H1 (cell line): ENCODE measurements at regions of chr12 and their contacts with region 1.

Region 1: DNA sequence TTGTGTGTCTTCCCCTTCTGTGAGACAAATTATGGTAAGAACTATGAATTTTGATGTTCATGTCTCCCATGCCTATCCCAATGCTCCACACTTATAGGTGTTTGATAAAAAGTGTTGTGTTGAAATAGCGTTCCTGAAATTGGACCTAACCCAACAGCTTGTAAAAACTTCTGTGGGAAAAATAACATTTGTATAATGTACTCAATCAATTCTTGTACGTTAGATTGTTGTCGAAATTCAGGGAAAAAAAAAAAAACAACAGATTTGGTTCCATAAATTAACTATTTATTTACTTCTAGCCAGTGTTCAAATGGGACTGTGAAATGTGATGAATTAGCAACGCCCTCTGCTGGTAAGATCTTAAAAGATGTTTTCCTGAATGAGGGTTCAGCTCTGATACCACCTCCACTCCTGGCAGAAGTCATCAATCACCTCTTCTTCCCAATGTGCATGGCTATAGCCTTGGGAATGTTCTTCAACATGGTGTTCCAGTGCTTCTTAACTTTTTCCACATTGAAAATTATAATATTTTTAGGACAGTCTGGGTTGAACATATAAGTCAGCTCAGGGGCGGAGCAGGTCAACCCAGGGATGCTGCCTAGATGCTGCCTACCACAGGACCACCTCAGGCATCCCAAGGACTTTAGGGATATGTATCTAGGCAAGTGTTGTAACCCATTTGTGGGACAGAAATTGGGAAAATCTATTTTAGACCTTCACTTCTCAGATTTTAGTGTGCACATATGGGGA is 170.6 kb downstream of the OTOGL start:
- DNase-seq: no peak
- H3K4me3 ChIP-seq: no peak overlapping the region
- H3K27ac ChIP-seq: no peak overlapping the region
- H3K4me1 ChIP-seq: no peaks in the 10 kb centered on the region
- H3K27me3 ChIP-seq: no peaks in the 10 kb centered on the region
- CTCF ChIP-seq: peak in 2 of 3 experiments; percentile 59 to 64; a peak in 2 of 4 replicates
- EP300 ChIP-seq: no peak
- POLR2A ChIP-seq: no peak
- RAD21 ChIP-seq: peak; percentile 74 to 78

Region 2: DNA sequence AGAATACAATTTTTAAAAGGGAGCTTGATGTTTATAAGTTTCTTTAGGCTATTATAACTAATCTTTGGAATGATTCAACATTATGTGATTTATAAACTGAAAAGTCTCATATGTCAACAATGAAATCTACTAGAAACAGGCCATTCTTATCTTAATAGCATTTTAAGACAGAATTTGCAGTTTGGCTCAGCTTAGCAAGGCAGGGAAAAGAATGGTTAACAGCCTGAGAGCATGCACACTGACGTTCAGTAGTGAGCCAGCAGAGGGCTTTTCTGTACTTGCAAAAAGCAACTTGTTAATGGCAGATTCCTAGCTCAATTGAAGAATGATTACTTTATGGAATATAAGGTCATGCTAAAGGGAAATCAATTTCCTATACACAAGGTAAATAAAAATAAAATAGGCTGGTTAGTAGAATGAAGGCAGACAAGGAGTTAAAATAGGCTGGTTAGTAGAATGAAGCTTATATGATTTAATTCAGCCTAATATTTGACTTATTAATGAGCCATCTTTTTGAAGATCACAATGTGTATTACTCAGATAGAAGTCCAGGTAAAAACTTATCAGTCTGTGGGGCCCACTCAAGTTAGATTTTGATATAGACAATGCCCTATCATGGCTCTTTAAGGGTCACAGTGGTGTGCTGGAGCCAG is 74.8 kb before region 1 on chr12:
- CTCF ChIA-PET with region 1: interaction called, 136 read pairs
- POLR2A ChIA-PET with region 1: no interaction called
- DNase-seq: no peak
- H3K4me3 ChIP-seq: no peak overlapping the region
- H3K27ac ChIP-seq: no peak overlapping the region
- H3K4me1 ChIP-seq: no peaks in the 10 kb centered on the region
- H3K27me3 ChIP-seq: no peaks in the 10 kb centered on the region
- CTCF ChIP-seq: peak in 2 of 3 experiments; percentile 64 to 67; a peak in 3 of 4 replicates
- EP300 ChIP-seq: no peak
- POLR2A ChIP-seq: no peak
- RAD21 ChIP-seq: peak; percentile 63 to 76

Region 3: GRCh38 chr12:80226576-80226975 is 43.4 kb before region 1 on chr12:
- CTCF ChIA-PET with region 1: interaction called, 13 read pairs
- POLR2A ChIA-PET with region 1: no interaction called
- DNase-seq: no peak
- H3K4me3 ChIP-seq: no peak overlapping the region
- H3K27ac ChIP-seq: no peak overlapping the region
- H3K4me1 ChIP-seq: no peaks in the 10 kb centered on the region; a peak in 1 of 7 replicates
- H3K27me3 ChIP-seq: no peaks in the 10 kb centered on the region
- CTCF ChIP-seq: no peak
- EP300 ChIP-seq: no peak
- POLR2A ChIP-seq: no peak
- RAD21 ChIP-seq: no peak

Region 4: DNA sequence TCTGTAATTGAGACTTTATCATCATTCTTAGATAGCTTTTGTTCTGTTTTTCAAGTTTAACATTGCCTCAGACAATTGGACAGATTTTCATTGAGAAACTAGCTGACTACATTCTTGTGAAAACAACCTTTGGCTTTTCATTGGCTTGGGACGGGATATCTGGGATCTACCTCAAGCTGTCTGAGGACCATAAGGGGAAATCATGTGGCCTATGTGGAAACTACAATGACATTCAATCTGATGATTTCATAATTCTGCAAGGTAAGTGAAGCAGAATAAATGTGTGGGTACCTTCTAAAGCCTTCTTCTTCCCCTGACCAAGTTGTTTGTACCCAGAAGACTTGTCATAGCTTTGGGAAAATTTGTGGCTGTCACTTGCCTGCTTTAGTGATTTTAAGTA is 37.1 kb before region 1 on chr12:
- CTCF ChIA-PET with region 1: interaction called, 13 read pairs
- POLR2A ChIA-PET with region 1: no interaction called
- DNase-seq: no peak
- H3K4me3 ChIP-seq: no peak overlapping the region
- H3K27ac ChIP-seq: no peak overlapping the region
- H3K4me1 ChIP-seq: no peaks in the 10 kb centered on the region; a peak in 1 of 7 replicates
- H3K27me3 ChIP-seq: no peaks in the 10 kb centered on the region
- CTCF ChIP-seq: no peak
- EP300 ChIP-seq: no peak
- POLR2A ChIP-seq: no peak
- RAD21 ChIP-seq: no peak